Activated B cell treated with CpG ODN at 0.5 μM for 24 hours (primary cell): ENCODE measurements at regions of chr12 and their contacts with region 1.

Region 1: DNA sequence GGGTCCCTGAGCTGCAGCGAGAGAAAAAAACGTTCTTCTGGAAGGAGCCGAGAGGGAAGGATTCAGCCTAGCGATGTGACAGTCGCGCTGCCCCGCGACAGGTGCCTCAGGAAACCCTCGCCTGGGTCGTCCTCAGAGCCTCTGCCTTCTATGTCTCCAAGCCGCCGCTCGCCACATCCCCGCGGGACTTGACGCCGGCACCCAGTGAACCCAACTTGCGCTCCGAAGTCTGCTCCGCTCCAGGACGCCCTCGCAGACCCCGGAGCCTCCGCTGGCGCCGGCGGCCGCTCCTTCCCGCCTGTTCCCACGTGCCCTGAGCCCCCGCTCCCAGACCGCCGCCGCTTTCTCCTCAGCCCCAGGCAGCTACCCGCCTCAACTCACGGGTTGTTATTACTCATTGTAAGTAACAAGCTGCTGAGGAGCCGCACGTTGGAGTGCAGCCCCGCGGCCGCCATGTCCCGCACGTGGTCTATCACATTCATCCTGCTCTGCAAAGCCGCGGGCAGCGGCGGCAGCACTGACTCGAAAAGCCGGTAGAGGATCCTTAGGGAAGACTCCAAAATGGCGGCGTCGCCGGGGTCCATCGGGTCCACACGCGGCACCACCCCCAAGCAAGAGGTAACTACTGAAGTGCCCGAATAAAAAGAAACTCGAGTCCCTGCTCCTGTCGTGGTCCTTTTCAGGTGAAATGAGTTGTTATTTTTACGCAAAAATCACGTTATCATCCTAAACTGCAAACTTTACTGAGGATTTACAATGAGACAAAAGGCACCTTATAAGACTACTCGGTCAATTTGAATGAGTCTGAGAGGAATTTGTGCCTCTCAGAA is at the start of gene ANAPC7:
- DNase-seq: peak; percentile 73
- ATAC-seq: peak; percentile 94
- H3K4me3 Mint-ChIP-seq: peak within 1 kb of the TSS; percentile 99
- H3K27ac Mint-ChIP-seq: peak within 1 kb of the TSS; percentile 99
- H3K4me1 Mint-ChIP-seq: peaks cover 33% of the 10 kb centered on the region
- H3K27me3 Mint-ChIP-seq: no peaks in the 10 kb centered on the region
- CTCF ChIP-seq: no peak
- total RNA-seq, gene ANAPC7: 69.8 and 76.2 TPM in 2 replicates

Region 2: DNA sequence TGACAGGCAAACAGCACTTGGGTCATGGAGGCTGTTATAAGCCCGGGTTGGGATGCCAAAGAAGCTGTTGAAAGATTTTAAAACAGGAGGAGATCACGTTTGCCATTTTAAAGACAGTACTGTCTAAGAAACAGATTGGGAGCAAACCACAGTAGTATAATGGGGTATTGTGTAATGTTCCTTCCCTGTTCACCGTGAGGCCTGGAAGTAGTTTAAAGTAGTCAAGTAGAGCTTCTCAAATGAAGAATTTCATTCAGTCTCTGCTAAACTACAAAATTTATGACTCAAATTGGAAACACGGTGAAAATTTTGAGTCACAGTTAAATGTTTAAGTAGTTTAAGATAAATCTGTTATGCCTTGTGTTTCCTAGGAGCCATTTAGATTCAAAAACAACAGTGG is 86.5 kb before region 1 on chr12:
- CTCF ChIA-PET with region 1: no interaction called
- POLR2A ChIA-PET with region 1: no interaction called
- intact Hi-C with region 1: no loop called
- DNase-seq: no peak
- ATAC-seq: no peak
- H3K4me3 Mint-ChIP-seq: no peak overlapping the region
- H3K27ac Mint-ChIP-seq: peak overlapping the region; percentile 8
- H3K4me1 Mint-ChIP-seq: peaks cover 13% of the 10 kb centered on the region
- H3K27me3 Mint-ChIP-seq: no peaks in the 10 kb centered on the region
- CTCF ChIP-seq: no peak

Region 3: GRCh38 chr12:110501752-110502738 is 98.7 kb after region 1 on chr12 and contains the starts of genes RAD9B and VPS29:
- CTCF ChIA-PET with region 1: no interaction called
- POLR2A ChIA-PET with region 1: no interaction called
- intact Hi-C with region 1: loop called (anchors 1 kb)
- DNase-seq: peak; percentile 95
- ATAC-seq: peak; percentile 95
- H3K4me3 Mint-ChIP-seq: peak within 1 kb of the TSS; percentile 99
- H3K27ac Mint-ChIP-seq: peak within 1 kb of the TSS; percentile 96
- H3K4me1 Mint-ChIP-seq: peaks cover 36% of the 10 kb centered on the region
- H3K27me3 Mint-ChIP-seq: no peaks in the 10 kb centered on the region
- CTCF ChIP-seq: no peak
- total RNA-seq, gene RAD9B: 1.2 and 1.3 TPM in 2 replicates
- total RNA-seq, gene VPS29: 99.6 and 117 TPM in 2 replicates